ENCODE measurements at regions of chr10 and their contacts with region 1.

Region 1: DNA sequence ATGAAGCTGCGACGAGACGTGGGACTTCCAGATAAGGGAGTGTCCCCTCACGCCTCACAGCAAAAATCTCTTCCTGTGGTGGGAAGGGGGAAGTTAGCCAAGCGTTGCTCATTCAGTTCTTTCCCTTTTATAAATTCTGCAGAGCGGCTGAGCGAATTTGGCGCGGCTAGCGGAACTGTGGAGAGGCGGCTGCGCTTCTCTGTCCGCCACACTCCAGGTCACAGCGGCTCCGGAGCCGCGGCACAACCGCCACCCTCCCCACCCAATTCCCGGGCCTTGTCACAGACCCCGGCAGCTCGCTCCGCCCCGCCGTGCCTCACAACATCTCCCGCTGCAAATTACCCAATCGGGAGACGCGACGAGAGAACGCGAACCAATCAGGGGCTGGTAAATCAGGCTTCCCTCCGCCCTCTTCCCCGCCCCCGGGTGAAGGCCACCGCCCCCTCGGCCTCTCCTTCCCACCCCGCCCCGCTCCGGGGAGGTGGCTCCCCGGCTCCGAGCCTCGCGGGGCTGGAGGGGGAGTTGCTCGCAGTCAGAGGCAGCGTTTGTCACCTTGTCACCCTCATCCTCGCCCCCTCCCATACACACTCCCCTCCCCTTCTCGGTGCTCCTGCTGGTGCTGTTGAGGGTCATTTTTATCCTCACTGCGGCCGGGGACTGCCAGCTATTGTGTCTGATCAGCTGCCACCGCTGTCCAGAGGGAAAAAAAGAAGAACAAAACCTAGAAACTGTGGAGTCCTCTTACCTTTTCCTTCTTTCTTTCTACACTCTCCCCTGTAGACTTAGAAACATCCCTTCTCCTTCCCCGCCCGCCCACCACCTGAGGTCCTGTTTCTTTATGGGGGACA is 918 bp upstream of the ARHGAP21 start:
- DNase-seq: peak; percentile 91 to 97 (median 96)
- ATAC-seq: peak; percentile 86
- H3K4me3 ChIP-seq: peak overlapping the region; percentile 80 to 93
- H3K4me3 Mint-ChIP-seq: peak overlapping the region; percentile 94
- H3K27ac ChIP-seq: peak overlapping the region; percentile 48 to 69
- H3K27ac Mint-ChIP-seq: peak overlapping the region; percentile 94
- H3K4me1 ChIP-seq: peaks cover 15% of the 10 kb centered on the region
- H3K4me1 Mint-ChIP-seq: peaks cover 24% of the 10 kb centered on the region
- H3K27me3 ChIP-seq: no peaks in the 10 kb centered on the region
- H3K27me3 Mint-ChIP-seq: no peaks in the 10 kb centered on the region
- CTCF ChIP-seq: no peak

Region 2: DNA sequence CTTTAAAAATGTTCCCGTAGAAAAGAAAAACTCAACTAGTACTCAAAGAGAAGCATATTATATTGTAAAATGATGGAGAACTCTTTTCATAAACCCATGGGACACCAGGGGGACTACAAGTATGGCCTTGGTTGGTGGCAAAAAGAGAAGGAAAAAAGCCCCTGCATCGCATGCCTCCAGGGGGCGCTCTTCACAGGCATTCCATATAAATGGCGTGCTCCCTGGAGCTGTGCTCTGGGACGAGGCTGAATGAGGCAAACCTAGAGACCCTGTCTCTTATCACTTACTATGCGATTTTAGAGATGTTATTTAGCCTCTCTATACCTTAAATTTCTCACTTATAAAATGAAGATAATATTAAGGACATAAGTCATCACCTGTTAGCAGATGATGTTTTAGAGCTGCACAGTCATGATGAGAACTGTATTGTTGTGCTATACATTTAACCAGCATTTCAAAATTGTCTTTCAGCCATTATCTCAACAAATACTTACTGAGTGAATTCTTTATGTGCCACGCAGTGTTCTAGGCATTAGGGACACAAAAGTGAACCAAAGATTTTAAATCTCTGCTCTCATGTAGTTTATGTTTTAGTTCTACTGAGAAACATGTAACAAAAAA is 106.7 kb before region 1 on chr10:
- CTCF ChIA-PET with region 1: no interaction called
- POLR2A ChIA-PET with region 1: interaction called, 9 read pairs
- intact Hi-C with region 1: loop called in 1 of 2 experiments (anchors 5 kb)
- DNase-seq: peak in 7 of 9 experiments; percentile 3 to 72 (median 50)
- ATAC-seq: no peak
- H3K4me3 ChIP-seq: no peak overlapping the region
- H3K4me3 Mint-ChIP-seq: no peak overlapping the region
- H3K27ac ChIP-seq: no peak overlapping the region
- H3K27ac Mint-ChIP-seq: peak overlapping the region; percentile 58
- H3K4me1 ChIP-seq: peaks cover 9% of the 10 kb centered on the region
- H3K4me1 Mint-ChIP-seq: peaks cover 29% of the 10 kb centered on the region
- H3K27me3 ChIP-seq: no peaks in the 10 kb centered on the region
- H3K27me3 Mint-ChIP-seq: no peaks in the 10 kb centered on the region
- CTCF ChIP-seq: peak; percentile 67

Region 3: GRCh38 chr10:24706479-24707118 is 18.0 kb before region 1 on chr10:
- CTCF ChIA-PET with region 1: interaction called, 4 read pairs
- POLR2A ChIA-PET with region 1: interaction called, 4 read pairs
- intact Hi-C with region 1: loop called in 1 of 2 experiments (anchors 2 kb)
- DNase-seq: peak in 6 of 9 experiments; percentile 15 to 48 (median 31)
- ATAC-seq: peak; percentile 90
- H3K4me3 ChIP-seq: no peak overlapping the region
- H3K4me3 Mint-ChIP-seq: no peak overlapping the region
- H3K27ac ChIP-seq: no peak overlapping the region
- H3K27ac Mint-ChIP-seq: no peak overlapping the region
- H3K4me1 ChIP-seq: no peaks in the 10 kb centered on the region
- H3K4me1 Mint-ChIP-seq: peaks cover 3% of the 10 kb centered on the region
- H3K27me3 ChIP-seq: no peaks in the 10 kb centered on the region
- H3K27me3 Mint-ChIP-seq: no peaks in the 10 kb centered on the region
- CTCF ChIP-seq: no peak

Region 4: GRCh38 chr10:24887855-24888231 is 163.2 kb after region 1 on chr10:
- CTCF ChIA-PET with region 1: no interaction called
- POLR2A ChIA-PET with region 1: interaction called, 3 read pairs
- intact Hi-C with region 1: loop called (anchors 1 to 5 kb)
- DNase-seq: no peak
- ATAC-seq: no peak
- H3K4me3 ChIP-seq: peak overlapping the region in 1 of 2 experiments; percentile 28
- H3K4me3 Mint-ChIP-seq: peak overlapping the region; percentile 63
- H3K27ac ChIP-seq: peak overlapping the region; percentile 3 to 73
- H3K27ac Mint-ChIP-seq: peak overlapping the region; percentile 87
- H3K4me1 ChIP-seq: peaks cover 60% of the 10 kb centered on the region
- H3K4me1 Mint-ChIP-seq: peaks cover 79% of the 10 kb centered on the region
- H3K27me3 ChIP-seq: no peaks in the 10 kb centered on the region
- H3K27me3 Mint-ChIP-seq: no peaks in the 10 kb centered on the region
- CTCF ChIP-seq: no peak

Region 5: DNA sequence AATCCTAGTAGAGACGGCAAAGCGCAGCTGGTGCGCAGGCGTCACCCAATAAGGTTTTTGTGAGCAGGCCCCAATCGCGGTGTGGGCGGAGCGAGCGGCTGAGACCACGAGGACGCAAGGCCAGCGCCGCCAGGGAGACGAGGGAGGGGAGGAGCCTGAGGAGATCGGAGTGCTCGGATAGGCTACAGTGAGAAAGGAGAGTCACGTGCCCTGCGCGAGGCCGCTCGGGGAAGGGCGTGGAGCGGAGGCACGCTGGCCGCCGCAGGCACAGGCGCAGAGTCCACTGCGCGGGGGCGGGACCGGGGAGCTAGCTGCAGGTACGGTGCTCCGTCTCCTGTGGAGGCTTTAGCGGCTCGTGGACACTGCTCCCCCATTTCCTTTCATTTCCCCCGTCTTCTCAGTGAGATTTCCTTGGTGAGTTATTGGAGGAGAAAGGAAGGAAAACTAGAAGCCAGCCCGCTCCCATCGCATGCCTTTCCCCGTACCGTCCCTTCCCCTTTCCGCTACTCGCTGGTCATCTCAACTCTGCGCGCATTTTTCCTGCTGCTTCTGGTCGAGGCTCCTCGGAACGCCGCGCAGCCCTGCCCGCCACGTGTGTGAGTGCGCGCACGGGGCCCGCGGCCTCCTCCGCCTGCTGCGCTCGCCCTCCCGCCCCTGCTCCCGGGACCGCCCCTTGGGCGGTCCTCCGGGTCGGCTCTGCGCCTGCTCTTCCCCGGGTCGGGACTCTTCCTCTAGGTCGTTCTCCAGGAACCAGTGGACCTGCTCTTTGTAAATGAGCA is 292.0 kb after region 1 on chr10 and contains the start of gene THNSL1:
- CTCF ChIA-PET with region 1: no interaction called
- POLR2A ChIA-PET with region 1: interaction called, 7 read pairs
- intact Hi-C with region 1: loop called (anchors 1 to 2 kb)
- DNase-seq: peak; percentile 93 to 99 (median 98)
- ATAC-seq: peak; percentile 94
- H3K4me3 ChIP-seq: peak within 1 kb of the TSS; percentile 69 to 76
- H3K4me3 Mint-ChIP-seq: peak within 1 kb of the TSS; percentile 93
- H3K27ac ChIP-seq: peak within 1 kb of the TSS; percentile 82 to 91
- H3K27ac Mint-ChIP-seq: peak within 1 kb of the TSS; percentile 95
- H3K4me1 ChIP-seq: peaks cover 18% of the 10 kb centered on the region
- H3K4me1 Mint-ChIP-seq: peaks cover 35% of the 10 kb centered on the region
- H3K27me3 ChIP-seq: no peaks in the 10 kb centered on the region
- H3K27me3 Mint-ChIP-seq: no peaks in the 10 kb centered on the region
- CTCF ChIP-seq: no peak
- total RNA-seq, gene THNSL1: 0.53 to 0.71 TPM

Measured in CD8-positive, alpha-beta T cell (primary cell).